Breast epithelium (tissue), 4 donors: ENCODE measurements at regions of chr7 and their contacts with region 1.

Region 1: GRCh38 chr7:139643951-139644585 is 120.6 kb downstream of the CLEC2L start:
- DNase-seq: no peak
- H3K4me3 ChIP-seq: no peak overlapping the region
- H3K27ac ChIP-seq: no peak overlapping the region
- H3K4me1 ChIP-seq: no peaks in the 10 kb centered on the region
- H3K27me3 ChIP-seq: no peaks in the 10 kb centered on the region
- CTCF ChIP-seq: no peak
- POLR2A ChIP-seq: no peak

Region 2: GRCh38 chr7:139452958-139453672 is 191.0 kb before region 1 on chr7:
- intact Hi-C with region 1: no loop called
- DNase-seq: no peak
- H3K4me3 ChIP-seq: no peak overlapping the region
- H3K27ac ChIP-seq: no peak overlapping the region
- H3K4me1 ChIP-seq: no peaks in the 10 kb centered on the region
- H3K27me3 ChIP-seq: no peaks in the 10 kb centered on the region
- CTCF ChIP-seq: no peak
- POLR2A ChIP-seq: no peak

Region 3: GRCh38 chr7:140003913-140004382 is 359.9 kb after region 1 on chr7:
- intact Hi-C with region 1: loop called (anchors 1 kb)
- DNase-seq: no peak
- H3K4me3 ChIP-seq: no peak overlapping the region
- H3K27ac ChIP-seq: no peak overlapping the region
- H3K4me1 ChIP-seq: no peaks in the 10 kb centered on the region
- H3K27me3 ChIP-seq: no peaks in the 10 kb centered on the region
- CTCF ChIP-seq: peak in 2 of 3 donors; percentile 44 to 47
- POLR2A ChIP-seq: no peak